ENCODE measurements at regions of chr15 and their contacts with region 1.

Region 1: DNA sequence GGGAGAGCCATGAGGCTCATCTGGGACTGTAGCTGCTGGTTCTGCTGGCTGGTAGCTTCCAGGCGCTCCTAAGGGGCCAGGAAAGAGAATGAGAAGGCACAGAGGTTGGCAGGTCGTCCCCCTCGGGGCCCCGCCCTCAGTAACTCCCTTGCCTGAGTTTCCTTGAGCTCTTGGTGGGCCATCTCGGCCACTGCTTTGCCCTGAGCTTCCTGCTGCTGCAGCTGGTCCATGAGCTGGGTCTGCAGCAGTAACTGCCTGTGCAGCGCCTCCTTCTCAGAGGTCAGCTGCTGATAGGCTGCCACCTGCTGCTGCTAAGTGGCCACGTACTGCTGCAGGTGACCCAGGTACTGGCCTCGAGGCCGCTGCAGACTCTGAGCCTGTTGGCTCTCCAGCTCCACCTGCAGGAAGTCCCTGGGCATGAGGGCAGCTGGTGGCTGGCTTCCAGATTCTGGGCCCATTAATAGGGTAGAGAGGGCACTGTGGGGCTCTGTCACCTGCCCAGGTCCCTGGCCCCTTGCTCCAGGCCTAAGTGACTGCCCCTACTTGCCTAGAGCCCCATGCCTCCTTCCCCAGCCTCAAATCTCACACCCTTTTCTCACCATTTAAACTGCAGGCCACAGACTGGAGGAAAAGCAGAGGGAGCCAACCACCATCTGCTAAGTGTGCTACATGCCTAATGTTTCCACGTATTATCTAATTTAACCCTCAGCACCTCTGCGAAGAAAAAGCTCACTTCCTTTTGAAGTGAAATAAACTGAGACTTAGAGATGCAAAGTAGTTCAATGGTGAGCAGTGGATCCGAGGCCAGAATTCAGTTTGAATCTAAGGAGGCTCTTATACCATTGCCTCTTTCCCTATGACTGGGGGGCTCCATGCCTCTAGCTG is 10.8 kb upstream of the VPS33B start:
- DNase-seq: peak; percentile 15 to 89 (median 78)
- ATAC-seq: peak; percentile 99
- H3K4me3 ChIP-seq: no peak overlapping the region
- H3K27ac ChIP-seq: no peak overlapping the region
- H3K4me1 ChIP-seq: peaks cover 0 to 5% of the 10 kb centered on the region in 2 donors
- H3K27me3 ChIP-seq: peaks cover 0 to 11% of the 10 kb centered on the region in 2 donors
- CTCF ChIP-seq: peak; percentile 65 to 75

Region 2: GRCh38 chr15:90931737-90932659 is 101.2 kb before region 1 on chr15 and contains the start of gene HDDC3:
- intact Hi-C with region 1: no loop called
- DNase-seq: peak; percentile 79 to 100 (median 90)
- ATAC-seq: peak; percentile 67
- H3K4me3 ChIP-seq: peak within 1 kb of the TSS; percentile 57 to 69
- H3K27ac ChIP-seq: peak within 1 kb of the TSS; percentile 90 to 96
- H3K4me1 ChIP-seq: peaks cover 36 to 81% of the 10 kb centered on the region in 2 donors
- H3K27me3 ChIP-seq: no peaks in the 10 kb centered on the region
- CTCF ChIP-seq: peak; percentile 95 to 99
- polyA plus RNA-seq, gene HDDC3: 10.3 to 15.9 (median 14.0) TPM

Region 3: GRCh38 chr15:90954712-90955671 is 78.2 kb before region 1 on chr15 and contains the start of gene RCCD1:
- intact Hi-C with region 1: loop called in 1 of 2 experiments (anchors 10 kb)
- DNase-seq: peak; percentile 89 to 98 (median 96)
- ATAC-seq: peak; percentile 95
- H3K4me3 ChIP-seq: peak within 1 kb of the TSS; percentile 67 to 95
- H3K27ac ChIP-seq: peak within 1 kb of the TSS; percentile 83 to 84
- H3K4me1 ChIP-seq: peaks cover 7 to 35% of the 10 kb centered on the region in 2 donors
- H3K27me3 ChIP-seq: no peaks in the 10 kb centered on the region
- CTCF ChIP-seq: peak in 1 of 2 donors; percentile 11
- polyA plus RNA-seq, gene RCCD1: 16.1 to 21.2 (median 20.0) TPM

Region 4: GRCh38 chr15:91126080-91126479 is 92.9 kb after region 1 on chr15:
- intact Hi-C with region 1: no loop called
- DNase-seq: no peak
- ATAC-seq: peak; percentile 18
- H3K4me3 ChIP-seq: no peak overlapping the region
- H3K27ac ChIP-seq: no peak overlapping the region
- H3K4me1 ChIP-seq: no peaks in the 10 kb centered on the region
- H3K27me3 ChIP-seq: peaks cover 0 to 57% of the 10 kb centered on the region in 2 donors
- CTCF ChIP-seq: no peak

Region 5: DNA sequence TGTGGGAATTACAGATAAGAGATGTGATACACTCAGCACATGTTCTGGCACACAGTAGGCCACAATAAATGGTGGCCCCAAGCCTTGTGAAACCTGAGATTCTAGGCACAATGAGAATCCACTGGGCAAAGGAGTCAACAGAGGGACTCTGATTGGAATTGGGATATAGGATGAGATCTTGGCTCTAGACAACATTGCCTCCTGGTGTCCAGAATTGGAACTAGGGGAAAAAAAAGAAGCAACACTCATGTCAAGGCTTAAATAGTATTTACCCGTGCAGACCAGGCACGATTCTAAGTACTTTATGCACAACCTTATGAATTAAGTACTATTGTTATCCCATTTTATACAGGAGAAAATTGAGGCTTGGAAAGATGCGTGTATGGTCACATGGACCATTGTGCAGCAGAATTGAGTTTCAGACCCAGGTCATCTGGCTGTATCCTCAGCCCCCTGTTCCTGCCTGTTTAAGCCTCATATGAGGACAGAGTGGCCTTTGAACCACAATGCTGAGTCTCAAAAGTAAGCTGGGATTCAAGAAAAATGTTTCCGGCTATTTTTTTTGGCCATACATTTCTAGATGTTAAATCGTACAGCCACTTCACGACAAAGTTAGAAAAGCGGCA is 191.7 kb after region 1 on chr15:
- intact Hi-C with region 1: no loop called
- DNase-seq: peak in 1 of 4 donors; percentile 53
- ATAC-seq: peak; percentile 81
- H3K4me3 ChIP-seq: no peak overlapping the region
- H3K27ac ChIP-seq: no peak overlapping the region
- H3K4me1 ChIP-seq: no peaks in the 10 kb centered on the region
- H3K27me3 ChIP-seq: peaks cover 0 to 24% of the 10 kb centered on the region in 2 donors
- CTCF ChIP-seq: peak; percentile 49 to 66

Region 6: DNA sequence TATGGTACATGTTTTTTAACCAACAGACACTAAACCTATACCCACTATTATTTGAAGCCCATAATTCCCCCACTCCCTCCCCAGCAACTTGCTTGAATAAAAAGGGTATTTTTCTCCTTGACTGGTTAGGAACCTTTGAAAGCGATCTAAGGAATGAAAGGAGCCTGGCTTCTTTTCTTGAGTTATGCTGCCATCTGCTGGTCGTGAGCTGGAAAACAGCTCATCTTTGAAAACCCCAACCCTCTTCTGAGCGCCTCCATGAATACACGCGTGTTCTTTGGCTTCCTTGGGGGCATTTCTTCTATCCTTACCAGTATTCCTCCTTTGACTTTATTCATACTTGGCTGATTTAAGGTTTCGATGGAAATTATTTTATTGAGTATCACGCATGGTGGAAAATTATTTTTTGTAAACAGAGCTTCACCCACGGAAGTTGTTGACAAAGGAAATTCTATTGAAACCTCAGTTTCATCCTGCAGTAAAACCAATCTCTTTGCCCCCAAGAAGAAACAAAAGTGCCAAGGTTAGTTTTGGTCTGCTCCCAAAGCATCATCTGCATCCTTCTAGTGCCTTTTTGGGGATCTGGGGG is 238.5 kb after region 1 on chr15:
- intact Hi-C with region 1: no loop called
- DNase-seq: peak in 2 of 4 donors; percentile 74 to 80
- ATAC-seq: peak; percentile 96
- H3K4me3 ChIP-seq: no peak overlapping the region
- H3K27ac ChIP-seq: no peak overlapping the region
- H3K4me1 ChIP-seq: peaks cover 0 to 8% of the 10 kb centered on the region in 2 donors
- H3K27me3 ChIP-seq: peaks cover 3 to 19% of the 10 kb centered on the region in 2 donors
- CTCF ChIP-seq: peak; percentile 52 to 83

Measured in left lung (tissue), 14 donors.